ENCODE measurements at regions of chr17 and their contacts with region 1.

Region 1: GRCh38 chr17:76681222-76682137 is 29.3 kb downstream of the MXRA7 start:
- DNase-seq: peak; percentile 86
- ATAC-seq: peak; percentile 66
- H3K4me3 Mint-ChIP-seq: no peak overlapping the region
- H3K27ac Mint-ChIP-seq: no peak overlapping the region
- H3K4me1 Mint-ChIP-seq: peaks cover 10% of the 10 kb centered on the region
- H3K27me3 Mint-ChIP-seq: peaks cover 2% of the 10 kb centered on the region

Region 2: GRCh38 chr17:76547184-76547641 is 134.3 kb before region 1 on chr17:
- CTCF ChIA-PET with region 1: interaction called, 14 read pairs
- POLR2A ChIA-PET with region 1: no interaction called
- DNase-seq: peak; percentile 80
- ATAC-seq: peak; percentile 95
- H3K4me3 Mint-ChIP-seq: no peak overlapping the region
- H3K27ac Mint-ChIP-seq: no peak overlapping the region
- H3K4me1 Mint-ChIP-seq: peaks cover 21% of the 10 kb centered on the region
- H3K27me3 Mint-ChIP-seq: peaks cover 8% of the 10 kb centered on the region

Region 3: DNA sequence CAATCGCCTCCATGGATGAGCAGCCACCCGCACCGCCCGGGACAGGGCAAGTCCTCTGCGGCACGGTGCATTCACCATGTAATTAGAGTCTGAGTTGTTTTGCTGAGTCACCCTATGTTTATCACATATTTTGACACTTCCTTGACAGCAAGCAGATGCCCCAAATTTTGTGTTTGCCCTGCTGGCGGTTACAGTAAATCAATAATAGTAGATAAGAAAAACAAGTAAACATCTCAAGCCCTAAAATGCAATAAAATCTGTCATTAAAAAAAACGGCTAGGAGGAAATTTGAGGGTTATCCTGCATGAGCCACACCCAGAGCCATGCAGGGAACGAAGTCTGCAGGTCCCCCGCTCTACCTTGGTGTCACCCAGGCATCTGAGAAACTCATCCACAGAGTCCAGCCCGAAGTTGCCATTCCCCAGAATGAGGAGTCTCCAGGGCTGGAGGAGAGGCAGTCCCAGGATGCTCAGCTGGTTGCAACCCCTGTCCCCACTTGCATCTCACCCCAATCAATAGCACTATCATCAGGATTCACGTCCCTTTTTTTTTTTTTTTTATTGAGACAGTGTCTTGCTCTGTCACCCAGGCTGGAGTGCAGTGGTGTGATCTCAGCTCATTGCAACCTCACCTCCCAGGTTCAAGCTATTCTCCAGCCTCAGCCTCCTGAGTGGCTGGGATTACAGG is 21.4 kb before region 1 on chr17:
- CTCF ChIA-PET with region 1: interaction called, 17 read pairs
- POLR2A ChIA-PET with region 1: no interaction called
- DNase-seq: peak; percentile 29
- ATAC-seq: no peak
- H3K4me3 Mint-ChIP-seq: no peak overlapping the region
- H3K27ac Mint-ChIP-seq: peak overlapping the region; percentile 53
- H3K4me1 Mint-ChIP-seq: peaks cover 28% of the 10 kb centered on the region
- H3K27me3 Mint-ChIP-seq: peaks cover 6% of the 10 kb centered on the region

Region 4: GRCh38 chr17:76700617-76701470 is 19.4 kb after region 1 on chr17:
- CTCF ChIA-PET with region 1: interaction called, 22 read pairs
- POLR2A ChIA-PET with region 1: no interaction called
- DNase-seq: no peak
- ATAC-seq: peak; percentile 25
- H3K4me3 Mint-ChIP-seq: no peak overlapping the region
- H3K27ac Mint-ChIP-seq: peak overlapping the region; percentile 72
- H3K4me1 Mint-ChIP-seq: peaks cover 21% of the 10 kb centered on the region
- H3K27me3 Mint-ChIP-seq: no peaks in the 10 kb centered on the region

Region 5: DNA sequence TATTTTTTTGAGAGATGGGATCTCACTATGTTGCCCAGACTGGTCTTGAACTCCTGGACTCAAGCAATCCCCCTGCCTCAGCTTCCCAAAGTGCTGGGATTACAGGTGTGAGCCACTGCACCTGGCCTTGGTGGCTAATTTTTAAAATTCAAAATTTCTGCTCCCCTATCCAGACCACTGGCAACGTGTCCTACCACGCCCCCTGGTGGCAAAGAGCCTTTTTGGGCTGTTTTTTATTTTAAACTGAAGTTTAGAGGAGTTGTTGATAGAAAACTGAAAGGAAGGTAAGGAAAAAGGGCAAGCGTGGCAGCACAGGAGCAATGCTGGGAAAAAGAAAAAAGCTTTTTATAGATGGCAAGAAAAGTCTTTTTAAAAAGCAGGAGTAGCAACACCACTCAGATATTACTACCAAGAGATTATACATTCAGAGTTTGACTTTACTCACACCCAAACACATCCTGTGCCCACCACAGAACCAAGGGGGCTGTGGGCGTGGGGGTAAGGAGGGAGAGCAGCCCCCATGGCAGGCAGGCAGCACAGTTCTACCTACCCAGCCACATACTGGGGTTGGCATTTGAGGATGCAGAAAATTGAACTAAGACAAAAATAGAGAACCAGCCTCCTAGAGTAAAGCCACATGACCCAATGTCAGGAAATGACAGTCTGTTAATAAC is 33.5 kb after region 1 on chr17:
- CTCF ChIA-PET with region 1: interaction called, 19 read pairs
- POLR2A ChIA-PET with region 1: interaction called, 5 read pairs
- DNase-seq: peak; percentile 87
- ATAC-seq: no peak
- H3K4me3 Mint-ChIP-seq: peak overlapping the region; percentile 7
- H3K27ac Mint-ChIP-seq: peak overlapping the region; percentile 91
- H3K4me1 Mint-ChIP-seq: peaks cover 62% of the 10 kb centered on the region
- H3K27me3 Mint-ChIP-seq: no peaks in the 10 kb centered on the region

Region 6: GRCh38 chr17:76924345-76925342 is 243.2 kb after region 1 on chr17:
- CTCF ChIA-PET with region 1: no interaction called
- POLR2A ChIA-PET with region 1: no interaction called
- DNase-seq: no peak
- ATAC-seq: peak; percentile 31
- H3K4me3 Mint-ChIP-seq: no peak overlapping the region
- H3K27ac Mint-ChIP-seq: no peak overlapping the region
- H3K4me1 Mint-ChIP-seq: no peaks in the 10 kb centered on the region
- H3K27me3 Mint-ChIP-seq: no peaks in the 10 kb centered on the region